Common myeloid progenitor, CD34-positive (primary cell): ENCODE measurements at regions of chr6 and their contacts with region 1.

Region 1: DNA sequence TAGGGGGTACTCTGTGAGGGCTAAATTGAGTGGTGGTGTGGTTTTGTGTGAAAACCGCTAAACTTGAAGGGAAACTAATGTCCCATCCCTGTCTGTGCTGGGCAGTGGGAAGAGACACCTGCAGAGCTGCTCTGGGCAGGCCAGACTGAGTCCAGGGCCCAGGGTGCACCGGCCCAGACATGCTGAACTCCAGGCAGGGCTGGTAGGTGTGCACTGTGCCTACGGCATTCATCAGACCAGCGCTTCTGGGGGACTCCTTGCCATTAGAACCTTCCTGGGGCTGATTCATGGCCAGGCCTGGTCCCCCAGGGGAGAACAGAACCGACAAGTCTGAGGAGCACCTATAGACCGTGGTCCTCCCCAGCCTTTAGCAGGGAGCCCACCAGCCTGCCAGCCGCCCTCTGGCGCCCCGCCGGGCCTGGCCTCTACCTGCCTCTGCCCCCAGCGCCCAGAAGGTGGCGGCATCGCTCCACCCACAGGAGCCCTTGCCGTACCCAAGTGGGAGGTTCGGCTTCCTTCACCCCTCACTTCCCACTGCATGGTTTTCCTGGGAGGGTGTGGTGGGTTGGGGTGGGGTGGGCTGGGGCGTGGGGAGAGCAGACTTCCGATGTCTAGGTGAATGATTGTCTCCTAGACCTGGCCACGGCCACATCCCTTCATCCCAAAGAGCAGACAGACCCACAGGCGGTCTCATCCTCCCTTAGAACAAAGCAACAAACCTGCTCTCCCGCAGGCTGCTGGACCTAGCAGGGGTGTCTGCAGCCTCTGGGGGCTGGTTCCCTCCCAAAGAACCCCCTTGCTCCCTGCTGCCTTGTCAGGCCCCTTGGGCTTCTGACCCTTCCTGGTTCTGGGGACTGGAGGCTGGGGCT is 15.5 kb downstream of the CCDC167 start:
- DNase-seq: peak in 2 of 3 donors; percentile 60 to 72
- H3K4me3 ChIP-seq: no peak overlapping the region
- H3K27ac ChIP-seq: no peak overlapping the region
- H3K4me1 ChIP-seq: peaks cover 0 to 3% (median under 1%) of the 10 kb centered on the region in 4 experiments
- H3K27me3 ChIP-seq: no peaks in the 10 kb centered on the region

Region 2: GRCh38 chr6:37499433-37500293 is 15.5 kb after region 1 on chr6 and contains the start of gene CCDC167:
- CTCF ChIA-PET with region 1: no interaction called
- POLR2A ChIA-PET with region 1: no interaction called
- DNase-seq: peak; percentile 94 to 97 (median 95)
- H3K4me3 ChIP-seq: peak within 1 kb of the TSS; percentile 42 to 90 (median 76)
- H3K27ac ChIP-seq: peak within 1 kb of the TSS in 1 of 2 experiments; percentile 76
- H3K4me1 ChIP-seq: peaks cover 25 to 51% (median 40%) of the 10 kb centered on the region in 4 experiments
- H3K27me3 ChIP-seq: no peaks in the 10 kb centered on the region

Region 3: DNA sequence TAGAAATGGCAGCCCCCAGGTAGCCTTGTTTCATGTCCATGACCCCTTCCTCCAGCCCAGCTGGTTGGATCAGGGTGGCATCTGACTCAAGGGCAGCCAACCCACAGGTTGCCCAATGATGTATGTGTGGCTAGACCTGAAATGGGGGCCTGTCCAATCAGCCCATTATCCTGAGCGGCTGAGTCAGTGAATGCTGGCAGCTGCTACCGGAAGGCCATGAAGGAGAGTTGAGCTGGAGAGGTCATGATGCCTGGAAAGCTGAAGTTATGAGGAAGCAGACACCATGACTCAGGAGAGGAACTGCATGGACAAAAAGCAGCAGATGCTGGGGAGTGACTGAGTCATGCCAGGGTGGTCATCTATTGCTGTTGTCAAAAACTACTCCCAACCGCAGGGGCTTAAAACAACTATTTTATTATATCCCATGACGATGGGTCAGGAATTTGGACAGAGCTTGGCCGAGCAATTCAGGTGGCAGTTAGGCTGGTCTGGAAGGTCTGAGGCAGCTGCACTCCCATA is 146.2 kb after region 1 on chr6:
- CTCF ChIA-PET with region 1: no interaction called
- POLR2A ChIA-PET with region 1: no interaction called
- DNase-seq: peak in 2 of 3 donors; percentile 66 to 77
- H3K4me3 ChIP-seq: no peak overlapping the region
- H3K27ac ChIP-seq: no peak overlapping the region
- H3K4me1 ChIP-seq: peaks cover 0 to 4% (median 2%) of the 10 kb centered on the region in 4 experiments
- H3K27me3 ChIP-seq: peaks cover 0 to 12% (median 0%) of the 10 kb centered on the region in 5 experiments

Region 4: DNA sequence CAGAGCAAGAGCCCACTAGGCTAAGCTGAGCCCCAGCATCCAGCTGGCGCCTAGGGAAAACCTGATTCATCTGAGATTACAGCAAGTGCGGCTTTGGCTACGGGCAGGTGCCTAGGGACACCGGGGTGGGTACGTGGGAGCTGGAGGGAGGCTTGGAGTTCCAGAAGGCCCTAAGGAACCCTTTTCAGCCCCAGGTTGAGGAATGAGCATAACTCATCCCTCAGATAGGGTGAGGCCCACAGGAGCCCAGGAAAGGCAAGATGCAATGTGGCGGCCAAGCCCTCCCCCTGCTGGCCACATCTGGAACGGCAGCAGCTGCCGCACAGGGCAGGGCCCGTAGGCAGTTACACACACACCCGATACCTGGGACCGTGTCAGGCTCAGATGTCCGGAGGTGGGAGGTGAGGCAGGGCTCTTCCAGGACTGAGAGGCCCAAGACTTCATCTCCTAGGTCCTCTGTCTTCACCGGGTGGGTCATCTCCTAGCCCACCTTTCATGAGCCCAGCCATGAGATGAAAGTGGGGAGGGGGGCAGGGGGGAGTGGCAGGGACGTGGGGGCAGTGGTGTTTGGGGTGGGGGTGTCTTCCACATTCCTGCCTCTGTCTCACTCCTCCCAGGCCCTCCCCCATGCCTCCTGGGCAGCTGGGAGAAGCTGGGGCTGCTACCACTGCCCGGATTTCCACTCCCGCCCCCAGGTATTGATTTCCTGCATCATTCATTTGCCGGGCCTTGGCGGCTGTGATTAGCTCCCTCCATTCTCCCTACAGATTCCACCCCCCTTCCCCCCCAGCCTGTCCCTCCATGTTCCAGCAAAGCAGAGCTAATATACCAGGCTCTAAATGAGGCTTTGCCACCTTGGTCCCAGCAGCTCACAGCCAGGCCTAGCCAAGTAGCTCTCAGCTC is 208.0 kb after region 1 on chr6:
- CTCF ChIA-PET with region 1: interaction called, 16 read pairs
- POLR2A ChIA-PET with region 1: no interaction called
- DNase-seq: peak in 2 of 3 donors; percentile 62 to 70
- H3K4me3 ChIP-seq: no peak overlapping the region
- H3K27ac ChIP-seq: no peak overlapping the region
- H3K4me1 ChIP-seq: peaks cover 0 to 29% (median 20%) of the 10 kb centered on the region in 4 experiments
- H3K27me3 ChIP-seq: peaks cover 0 to 48% (median 35%) of the 10 kb centered on the region in 5 experiments